ENCODE measurements at regions of chr14 and their contacts with region 1.

Region 1: DNA sequence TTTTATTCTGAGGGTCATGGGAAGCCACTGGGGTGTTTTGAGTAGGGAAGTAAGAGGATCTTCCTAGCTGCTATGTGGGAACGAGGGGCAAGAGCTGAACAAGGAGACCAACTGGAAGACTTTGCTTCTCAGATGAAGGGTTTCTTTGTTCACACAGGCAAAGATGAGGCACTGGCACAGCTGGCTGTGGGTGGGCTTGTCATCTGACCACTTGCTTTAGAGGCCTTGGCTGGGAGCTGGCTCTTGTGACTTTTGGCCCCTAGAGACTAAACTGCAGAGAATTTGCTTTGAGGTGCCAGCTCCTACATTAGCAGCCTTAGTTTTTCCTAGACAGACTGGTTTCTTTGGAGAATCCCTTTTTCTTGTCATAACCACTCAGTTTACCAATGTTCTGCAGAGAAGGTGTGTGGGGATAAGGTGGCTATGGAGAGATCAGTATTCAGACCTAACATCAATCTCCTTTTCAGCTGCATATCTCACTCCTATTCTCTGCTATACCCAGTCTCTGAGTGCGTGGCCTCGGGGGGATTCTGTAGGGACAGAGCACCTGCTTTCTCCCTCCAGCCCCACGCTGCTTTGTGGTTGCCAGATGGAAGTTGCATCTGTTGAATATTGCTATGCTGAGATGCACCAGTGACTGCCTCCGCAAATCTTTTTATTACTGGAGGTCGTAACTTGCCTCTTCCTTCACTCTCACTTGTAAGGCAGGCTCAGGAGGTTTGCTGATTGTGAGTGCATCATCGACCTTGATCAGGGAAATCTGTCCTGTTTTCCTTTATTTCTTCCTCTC is 12.7 kb downstream of the PPP2R5C start:
- DNase-seq: no peak
- ATAC-seq: no peak
- H3K4me3 ChIP-seq: no peak overlapping the region
- H3K27ac ChIP-seq: no peak overlapping the region
- H3K4me1 ChIP-seq: no peaks in the 10 kb centered on the region
- H3K27me3 ChIP-seq: no peaks in the 10 kb centered on the region
- CTCF ChIP-seq: no peak

Region 2: DNA sequence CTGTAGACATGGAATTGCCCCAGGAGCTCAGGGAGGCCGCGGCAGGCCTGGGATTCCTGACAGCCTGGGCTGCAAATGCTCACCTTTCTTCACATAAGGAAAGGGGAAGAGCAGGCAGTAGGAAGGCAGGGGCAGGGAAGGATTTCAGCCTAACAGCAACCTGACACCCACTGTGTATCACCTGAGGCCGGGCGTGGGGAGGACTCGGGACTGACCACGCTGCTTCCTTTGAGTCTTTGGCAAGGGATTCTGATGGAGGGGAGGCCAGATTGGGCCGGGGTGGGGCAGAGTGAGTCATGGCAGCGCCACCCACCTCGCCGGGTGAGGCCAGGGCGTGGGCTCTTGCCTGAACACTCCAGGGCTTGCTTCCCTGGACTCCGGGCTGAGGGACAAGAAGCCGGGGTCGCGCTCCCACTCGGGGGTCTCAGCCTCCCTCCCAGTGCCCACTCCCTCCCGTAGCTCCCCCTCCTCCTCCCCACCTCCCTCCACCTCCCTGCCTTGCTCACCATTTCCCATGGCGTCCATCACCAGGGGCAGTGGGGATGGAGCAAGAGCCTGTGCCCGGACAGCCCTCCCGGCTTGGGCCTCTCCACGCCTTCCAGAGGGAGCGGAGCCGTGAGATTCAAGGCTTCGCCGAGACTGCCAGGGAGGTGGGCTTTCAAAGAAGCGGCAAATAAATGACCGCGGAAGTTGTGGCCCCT is 622.8 kb before region 1 on chr14:
- intact Hi-C with region 1: no loop called
- DNase-seq: no peak
- ATAC-seq: no peak
- H3K4me3 ChIP-seq: no peak overlapping the region
- H3K27ac ChIP-seq: no peak overlapping the region
- H3K4me1 ChIP-seq: no peaks in the 10 kb centered on the region
- H3K27me3 ChIP-seq: no peaks in the 10 kb centered on the region
- CTCF ChIP-seq: no peak

Region 3: GRCh38 chr14:101810897-101811621 is 36.9 kb after region 1 on chr14:
- intact Hi-C with region 1: no loop called
- DNase-seq: no peak
- ATAC-seq: peak in 1 of 4 donors; percentile 25
- H3K4me3 ChIP-seq: peak overlapping the region in 3 of 4 donors; percentile 11 to 42 (median 41)
- H3K27ac ChIP-seq: peak overlapping the region; percentile 77 to 98 (median 96)
- H3K4me1 ChIP-seq: peaks cover 8 to 58% (median 57%) of the 10 kb centered on the region in 3 donors
- H3K27me3 ChIP-seq: no peaks in the 10 kb centered on the region
- CTCF ChIP-seq: no peak

Region 4: DNA sequence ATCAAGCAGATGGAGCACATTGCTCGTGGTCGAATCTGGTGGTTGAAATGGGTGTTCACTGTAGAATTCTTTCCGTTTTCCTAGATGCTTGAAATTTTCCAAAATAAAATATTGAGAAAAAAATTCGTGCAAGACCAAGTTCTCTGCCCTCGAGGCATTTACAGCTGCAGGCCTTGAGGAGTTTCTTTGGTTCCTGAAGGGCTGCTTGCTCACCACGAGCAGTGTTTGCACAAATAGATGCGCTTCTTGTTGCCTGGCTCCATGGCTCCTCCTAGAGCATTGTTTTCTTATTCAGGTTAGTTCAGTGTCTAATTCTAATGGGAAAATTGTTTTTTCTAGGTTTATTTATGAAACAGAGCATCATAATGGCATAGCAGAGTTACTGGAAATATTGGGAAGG is 115.7 kb after region 1 on chr14:
- intact Hi-C with region 1: loop called in 2 of 3 experiments (anchors 10 kb)
- DNase-seq: no peak
- ATAC-seq: peak in 3 of 4 donors; percentile 61 to 79 (median 72)
- H3K4me3 ChIP-seq: no peak overlapping the region
- H3K27ac ChIP-seq: no peak overlapping the region
- H3K4me1 ChIP-seq: no peaks in the 10 kb centered on the region
- H3K27me3 ChIP-seq: no peaks in the 10 kb centered on the region
- CTCF ChIP-seq: no peak